Vagina (tissue), 2 donors: ENCODE measurements at regions of chr16 and their contacts with region 1.

Region 1: GRCh38 chr16:8708536-8708935 is 34.1 kb downstream of the ABAT start:
- DNase-seq: no peak
- H3K4me3 ChIP-seq: no peak overlapping the region
- H3K27ac ChIP-seq: no peak overlapping the region
- H3K4me1 ChIP-seq: peaks cover 10% of the 10 kb centered on the region
- H3K27me3 ChIP-seq: no peaks in the 10 kb centered on the region
- CTCF ChIP-seq: no peak
- POLR2A ChIP-seq: no peak

Region 2: GRCh38 chr16:10609402-10609774 is 1900.9 kb after region 1 on chr16:
- intact Hi-C with region 1: loop called (anchors 10 kb)
- DNase-seq: no peak
- H3K4me3 ChIP-seq: no peak overlapping the region
- H3K27ac ChIP-seq: no peak overlapping the region
- H3K4me1 ChIP-seq: peaks cover 8% of the 10 kb centered on the region
- H3K27me3 ChIP-seq: no peaks in the 10 kb centered on the region
- CTCF ChIP-seq: no peak
- POLR2A ChIP-seq: no peak